Activated CD4-positive, alpha-beta T cell treated with anti-CD3 and anti-CD28 coated beads for 36 hours (primary cell): ENCODE measurements at regions of chr2 and their contacts with region 1.

Region 1: DNA sequence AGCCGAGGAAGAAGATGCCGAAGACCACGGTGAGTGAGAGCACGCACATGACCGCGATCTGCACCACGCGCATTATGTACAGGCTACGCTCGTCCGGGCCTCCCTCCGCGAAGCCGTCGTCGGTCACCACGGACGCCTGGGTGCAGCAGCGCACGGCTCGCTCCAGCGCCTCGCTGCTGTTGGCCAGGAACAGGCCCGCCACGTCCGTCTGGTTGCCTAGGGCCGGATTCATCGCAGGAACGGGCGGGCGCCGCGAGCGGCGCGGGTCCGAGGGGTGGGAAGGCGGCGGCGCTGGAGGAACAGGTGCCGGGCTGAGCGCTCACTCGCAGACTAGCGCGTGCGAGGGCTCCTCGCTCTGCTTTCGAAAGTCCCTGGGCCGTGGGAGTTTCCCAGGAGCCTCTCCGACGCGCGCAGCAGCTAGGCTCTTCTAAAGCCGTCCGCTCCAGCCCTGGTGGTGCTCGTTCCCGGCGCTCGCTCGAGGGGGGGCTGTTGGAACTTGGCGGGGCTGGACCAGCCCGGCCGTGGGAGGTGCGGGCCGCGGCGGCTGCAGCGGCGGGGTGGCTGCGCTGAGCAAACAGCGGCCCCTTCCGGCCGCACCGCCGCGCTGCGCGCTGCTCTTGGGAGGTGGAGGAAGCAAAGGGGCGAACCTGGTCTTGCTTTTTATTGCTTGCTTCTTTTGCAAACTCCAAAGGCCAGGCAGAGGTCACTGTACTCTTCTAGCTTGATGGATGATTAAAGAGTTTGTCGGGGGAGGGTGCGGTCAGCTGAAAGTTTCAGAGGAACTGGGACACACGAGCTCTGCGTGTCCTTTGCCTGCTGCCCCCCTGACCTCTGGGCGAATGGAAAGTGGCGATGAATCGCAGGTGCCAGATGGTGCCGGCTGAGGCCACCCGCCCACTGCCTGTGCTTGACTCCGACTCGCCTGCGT is at the start of gene RPRM:
- DNase-seq: peak; percentile 74
- ATAC-seq: peak; percentile 85
- H3K4me3 Mint-ChIP-seq: peak within 1 kb of the TSS; percentile 34
- H3K27ac Mint-ChIP-seq: no peak within 1 kb of the TSS
- H3K4me1 Mint-ChIP-seq: peaks cover 20% of the 10 kb centered on the region
- H3K27me3 Mint-ChIP-seq: peaks cover 60% of the 10 kb centered on the region
- total RNA-seq, gene RPRM: not detected

Region 2: GRCh38 chr2:152036611-152037469 is 1441.8 kb before region 1 on chr2:
- CTCF ChIA-PET with region 1: no interaction called
- POLR2A ChIA-PET with region 1: no interaction called
- intact Hi-C with region 1: loop called in 1 of 2 experiments (anchors 5 kb)
- DNase-seq: peak; percentile 77
- ATAC-seq: peak; percentile 42
- H3K4me3 Mint-ChIP-seq: no peak overlapping the region
- H3K27ac Mint-ChIP-seq: no peak overlapping the region
- H3K4me1 Mint-ChIP-seq: no peaks in the 10 kb centered on the region
- H3K27me3 Mint-ChIP-seq: peaks cover 2% of the 10 kb centered on the region

Region 3: GRCh38 chr2:152740743-152741328 is 737.8 kb before region 1 on chr2:
- CTCF ChIA-PET with region 1: no interaction called
- POLR2A ChIA-PET with region 1: no interaction called
- intact Hi-C with region 1: loop called in 1 of 2 experiments (anchors 5 kb)
- DNase-seq: no peak
- ATAC-seq: peak; percentile 69
- H3K4me3 Mint-ChIP-seq: no peak overlapping the region
- H3K27ac Mint-ChIP-seq: no peak overlapping the region
- H3K4me1 Mint-ChIP-seq: peaks cover 2% of the 10 kb centered on the region
- H3K27me3 Mint-ChIP-seq: no peaks in the 10 kb centered on the region

Region 4: DNA sequence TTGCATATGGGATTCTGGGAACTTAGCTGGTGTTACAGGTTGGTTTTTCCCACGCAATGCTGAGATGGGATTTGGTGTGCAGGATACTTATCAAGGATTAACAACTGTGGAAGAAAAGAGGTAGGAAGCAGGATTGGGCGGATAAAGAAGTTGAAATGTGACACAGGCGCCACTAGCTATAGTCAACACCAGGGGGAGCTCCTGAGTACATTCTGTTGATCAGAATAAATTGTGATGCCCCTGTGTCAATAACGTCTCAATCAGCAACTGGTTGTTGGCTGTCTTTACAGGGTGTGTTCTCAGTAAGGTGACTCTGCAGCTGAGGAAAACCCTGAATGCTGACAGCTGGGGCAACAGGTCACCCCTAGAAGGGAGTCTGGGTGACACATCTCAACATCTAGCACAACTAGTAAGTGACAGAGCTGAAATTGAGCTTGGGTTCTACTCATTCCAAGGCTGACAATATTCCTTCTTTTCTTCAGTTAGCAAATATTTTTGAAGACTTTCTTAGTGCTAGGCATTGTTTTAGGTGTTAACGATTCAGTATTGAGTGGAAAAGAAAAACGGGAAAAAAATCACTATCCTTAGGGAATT is 617.2 kb before region 1 on chr2:
- CTCF ChIA-PET with region 1: interaction called, 3 read pairs
- POLR2A ChIA-PET with region 1: no interaction called
- intact Hi-C with region 1: loop called in 1 of 2 experiments (anchors 5 kb)
- DNase-seq: peak; percentile 39
- ATAC-seq: no peak
- H3K4me3 Mint-ChIP-seq: no peak overlapping the region
- H3K27ac Mint-ChIP-seq: no peak overlapping the region
- H3K4me1 Mint-ChIP-seq: no peaks in the 10 kb centered on the region
- H3K27me3 Mint-ChIP-seq: peaks cover 7% of the 10 kb centered on the region

Region 5: GRCh38 chr2:152925547-152926327 is 552.9 kb before region 1 on chr2:
- CTCF ChIA-PET with region 1: interaction called, 9 read pairs
- POLR2A ChIA-PET with region 1: no interaction called
- intact Hi-C with region 1: loop called in 1 of 2 experiments (anchors 1 kb)
- DNase-seq: peak; percentile 76
- ATAC-seq: peak; percentile 53
- H3K4me3 Mint-ChIP-seq: no peak overlapping the region
- H3K27ac Mint-ChIP-seq: no peak overlapping the region
- H3K4me1 Mint-ChIP-seq: no peaks in the 10 kb centered on the region
- H3K27me3 Mint-ChIP-seq: peaks cover 6% of the 10 kb centered on the region

Region 6: DNA sequence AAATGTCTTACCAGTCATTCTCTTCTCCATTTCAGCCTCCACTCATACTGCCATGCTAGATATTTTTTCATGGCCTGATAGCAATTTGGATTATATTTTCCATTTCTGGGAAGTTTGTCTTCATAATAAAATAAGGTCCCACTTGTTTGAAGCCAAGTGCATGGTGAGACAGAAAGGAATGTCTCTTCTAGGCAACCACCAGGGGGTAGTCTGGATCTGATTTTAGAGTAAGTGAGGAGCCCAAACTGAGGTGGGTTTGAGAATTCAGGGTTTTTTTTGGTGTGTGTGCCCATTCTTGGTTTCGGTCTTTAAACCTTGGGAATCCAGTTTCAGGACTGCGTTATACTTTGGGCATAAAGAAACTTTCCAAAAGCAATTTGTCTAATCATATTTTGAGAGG is 315.5 kb before region 1 on chr2:
- CTCF ChIA-PET with region 1: no interaction called
- POLR2A ChIA-PET with region 1: no interaction called
- intact Hi-C with region 1: loop called in 1 of 2 experiments (anchors 1 kb)
- DNase-seq: no peak
- ATAC-seq: no peak
- H3K4me3 Mint-ChIP-seq: no peak overlapping the region
- H3K27ac Mint-ChIP-seq: no peak overlapping the region
- H3K4me1 Mint-ChIP-seq: no peaks in the 10 kb centered on the region
- H3K27me3 Mint-ChIP-seq: no peaks in the 10 kb centered on the region

Region 7: GRCh38 chr2:153347818-153348495 is 130.6 kb before region 1 on chr2:
- CTCF ChIA-PET with region 1: no interaction called
- POLR2A ChIA-PET with region 1: no interaction called
- intact Hi-C with region 1: no loop called
- DNase-seq: no peak
- ATAC-seq: no peak
- H3K4me3 Mint-ChIP-seq: no peak overlapping the region
- H3K27ac Mint-ChIP-seq: no peak overlapping the region
- H3K4me1 Mint-ChIP-seq: no peaks in the 10 kb centered on the region
- H3K27me3 Mint-ChIP-seq: no peaks in the 10 kb centered on the region

Region 8: DNA sequence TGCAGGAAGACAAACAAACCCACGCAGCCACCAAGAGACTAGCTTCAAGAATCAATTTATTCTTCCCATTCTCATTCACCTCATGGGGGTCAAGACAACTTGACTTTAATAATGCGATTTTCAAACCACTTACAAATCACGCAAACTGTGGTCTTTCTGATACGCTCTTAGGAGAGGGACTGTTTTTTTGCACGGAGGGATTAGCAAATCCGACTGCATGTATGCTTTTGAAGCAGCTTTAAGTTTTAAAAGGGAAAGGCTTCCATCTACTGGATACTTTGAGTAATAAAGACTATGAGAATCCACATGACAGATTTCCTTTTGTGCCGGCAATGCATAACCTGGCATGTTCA is 897.0 kb after region 1 on chr2:
- CTCF ChIA-PET with region 1: no interaction called
- POLR2A ChIA-PET with region 1: no interaction called
- intact Hi-C with region 1: no loop called
- DNase-seq: no peak
- ATAC-seq: no peak
- H3K4me3 Mint-ChIP-seq: no peak overlapping the region
- H3K27ac Mint-ChIP-seq: no peak overlapping the region
- H3K4me1 Mint-ChIP-seq: no peaks in the 10 kb centered on the region
- H3K27me3 Mint-ChIP-seq: peaks cover 4% of the 10 kb centered on the region